ENCODE measurements at regions of chr9 and their contacts with region 1.

Region 1: DNA sequence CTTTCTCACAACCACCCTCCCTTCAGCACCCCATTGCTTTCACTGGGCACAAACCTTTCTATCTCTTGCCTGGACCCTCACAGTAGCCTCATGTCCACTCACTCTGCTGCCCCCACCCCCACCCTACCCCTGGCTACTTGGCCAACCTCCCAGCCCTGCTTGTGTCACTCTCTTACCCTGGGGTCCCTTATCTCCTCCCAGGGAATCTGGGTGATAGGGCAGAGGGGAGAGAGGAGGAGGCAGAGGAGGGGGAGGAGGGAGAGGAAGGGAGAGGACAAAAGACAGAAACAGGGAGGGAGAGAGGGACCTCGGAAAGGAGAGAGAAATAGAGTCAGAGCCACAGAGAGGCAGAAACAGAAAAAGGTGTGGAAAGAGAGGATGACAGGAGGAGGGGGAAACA is 25.0 kb upstream of the KIF12 start:
- DNase-seq: no peak
- H3K4me3 ChIP-seq: no peak overlapping the region
- H3K27ac ChIP-seq: no peak overlapping the region
- H3K4me1 ChIP-seq: no peaks in the 10 kb centered on the region
- H3K27me3 ChIP-seq: no peaks in the 10 kb centered on the region
- CTCF ChIP-seq: no peak

Region 2: GRCh38 chr9:114072184-114073140 is 51.7 kb before region 1 on chr9:
- CTCF ChIA-PET with region 1: no interaction called
- POLR2A ChIA-PET with region 1: no interaction called
- intact Hi-C with region 1: loop called (anchors 2 kb)
- DNase-seq: peak; percentile 23
- H3K4me3 ChIP-seq: no peak overlapping the region
- H3K27ac ChIP-seq: no peak overlapping the region
- H3K4me1 ChIP-seq: no peaks in the 10 kb centered on the region
- H3K27me3 ChIP-seq: peaks cover 8% of the 10 kb centered on the region
- CTCF ChIP-seq: peak; percentile 39

Measured in A673 (cell line).